ENCODE measurements at regions of chr5 and their contacts with region 1.

Region 1: GRCh38 chr5:73507062-73507461 is 8.8 kb downstream of the BTF3 start:
- DNase-seq: no peak
- H3K4me3 ChIP-seq: no peak overlapping the region
- CTCF ChIP-seq: no peak

Region 2: DNA sequence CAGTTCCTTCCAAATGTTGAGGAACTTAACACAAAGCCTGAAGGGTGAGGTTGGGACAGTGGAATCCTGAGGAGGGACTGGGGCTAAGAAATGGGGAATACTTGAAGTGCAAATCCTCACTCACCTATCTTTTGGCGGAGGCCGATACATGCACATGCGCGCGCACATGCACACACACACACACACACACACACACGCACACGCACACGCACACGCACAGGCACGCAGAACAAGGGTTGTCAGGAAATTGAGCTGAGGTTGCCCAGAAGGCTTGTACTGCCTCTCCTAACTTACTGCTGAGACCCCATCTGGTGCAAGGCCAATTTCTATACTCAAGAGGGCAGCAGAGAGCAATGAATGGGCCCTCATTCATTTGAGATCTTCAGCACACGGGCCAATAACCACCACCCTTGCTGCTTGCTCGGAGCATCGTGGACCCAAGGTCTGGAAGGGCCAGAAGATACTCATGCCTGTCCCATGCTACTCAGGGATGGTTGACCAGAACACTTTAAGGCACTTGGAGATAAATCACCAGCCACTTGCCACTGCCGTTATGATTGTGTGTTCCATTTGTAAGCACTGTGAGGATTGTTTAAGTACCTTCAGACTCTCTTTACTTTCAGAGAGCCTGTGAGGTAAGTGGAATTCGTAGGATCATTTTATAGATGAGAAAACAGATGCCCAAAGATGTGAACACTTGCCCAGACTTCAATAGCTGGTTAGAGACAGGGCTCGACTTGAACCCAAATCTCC is 12.6 kb after region 1 on chr5:
- CTCF ChIA-PET with region 1: interaction called, 71 read pairs
- POLR2A ChIA-PET with region 1: interaction called, 3 read pairs
- DNase-seq: no peak
- H3K4me3 ChIP-seq: no peak overlapping the region; the same call in 1 of the 2 replicates
- CTCF ChIP-seq: peak; percentile 87

Measured in AG04449 (cell line).